ENCODE measurements at regions of chr21 and their contacts with region 1.

Region 1: DNA sequence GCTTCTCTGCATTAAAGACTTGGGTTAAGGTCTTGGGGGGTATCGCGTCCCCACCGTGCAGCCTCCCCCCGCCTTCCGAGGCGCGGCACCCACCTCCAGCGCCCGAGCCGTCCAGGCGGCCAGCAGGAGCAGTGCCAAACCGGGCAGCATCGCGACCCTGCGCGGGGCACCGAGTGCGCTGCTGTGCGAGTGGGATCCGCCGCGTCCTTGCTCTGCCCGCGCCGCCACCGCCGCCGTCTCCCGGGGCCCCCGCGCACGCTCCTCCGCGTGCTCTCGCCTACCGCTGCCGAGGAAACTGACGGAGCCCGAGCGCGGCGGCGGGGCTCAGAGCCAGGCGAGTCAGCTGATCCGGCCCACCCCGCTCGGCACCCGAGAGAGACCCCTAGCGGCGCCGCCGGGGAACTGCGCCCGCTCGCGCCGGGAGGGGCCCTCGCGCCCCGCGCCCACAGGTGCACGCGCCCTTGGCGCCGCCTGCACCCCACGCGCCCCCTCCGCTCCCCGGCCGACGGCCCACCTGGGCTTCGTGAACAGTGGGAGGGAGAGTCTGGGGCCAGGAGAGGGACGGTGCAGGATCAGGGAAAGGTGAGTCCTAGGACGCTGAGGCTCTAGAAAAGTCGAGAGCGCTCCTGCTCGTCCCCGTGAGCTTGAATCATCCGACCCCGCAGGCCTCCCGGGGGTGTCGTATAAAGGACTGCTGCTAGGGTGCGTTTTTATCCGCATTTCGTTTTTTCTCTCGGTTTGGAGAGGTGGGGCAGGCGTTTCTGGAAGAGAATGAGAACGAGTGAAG is at the start of gene APP:
- DNase-seq: peak; percentile 92
- H3K4me3 ChIP-seq: peak within 1 kb of the TSS; percentile 74 to 93 (median 82)
- H3K27ac ChIP-seq: peak within 1 kb of the TSS; percentile 85 to 90 (median 88)
- H3K4me1 ChIP-seq: peaks cover 0 to 37% (median 29%) of the 10 kb centered on the region in 4 donors
- H3K27me3 ChIP-seq: no peaks in the 10 kb centered on the region
- CTCF ChIP-seq: peak in 3 of 4 experiments; percentile 35 to 98 (median 44)
- EP300 ChIP-seq: no peak
- POLR2A ChIP-seq: peak in 1 of 2 donors; percentile 29
- total RNA-seq, gene APP: 239 to 355 (median 299) TPM

Region 2: GRCh38 chr21:25734904-25735645 is 435.6 kb before region 1 on chr21 and contains the starts of genes ATP5PF and GABPA:
- intact Hi-C with region 1: loop called (anchors 5 kb)
- DNase-seq: peak; percentile 99
- H3K4me3 ChIP-seq: peak within 1 kb of the TSS; percentile 81 to 98 (median 85)
- H3K27ac ChIP-seq: peak within 1 kb of the TSS; percentile 94 to 99 (median 98)
- H3K4me1 ChIP-seq: peaks cover 0 to 55% (median 43%) of the 10 kb centered on the region in 4 donors
- H3K27me3 ChIP-seq: no peaks in the 10 kb centered on the region
- CTCF ChIP-seq: no peak
- EP300 ChIP-seq: peak in 1 of 4 donors; percentile 47
- POLR2A ChIP-seq: no peak
- total RNA-seq, gene ATP5PF: 232 to 283 (median 239) TPM
- total RNA-seq, gene GABPA: 17.6 to 32.5 (median 27.2) TPM

Region 3: GRCh38 chr21:25790122-25790877 is 380.4 kb before region 1 on chr21:
- intact Hi-C with region 1: loop called (anchors 10 kb)
- DNase-seq: no peak
- H3K4me3 ChIP-seq: peak overlapping the region; percentile 12 to 40 (median 38)
- H3K27ac ChIP-seq: peak overlapping the region in 3 of 4 donors; percentile 71 to 75 (median 72)
- H3K4me1 ChIP-seq: peaks cover 0 to 19% (median 15%) of the 10 kb centered on the region in 4 donors
- H3K27me3 ChIP-seq: no peaks in the 10 kb centered on the region
- CTCF ChIP-seq: peak in 3 of 4 experiments; percentile 27 to 48 (median 35)
- EP300 ChIP-seq: no peak
- POLR2A ChIP-seq: no peak

Region 4: GRCh38 chr21:25881525-25882376 is 288.9 kb before region 1 on chr21:
- intact Hi-C with region 1: loop called (anchors 1 kb)
- DNase-seq: peak; percentile 83
- H3K4me3 ChIP-seq: no peak overlapping the region
- H3K27ac ChIP-seq: no peak overlapping the region
- H3K4me1 ChIP-seq: no peaks in the 10 kb centered on the region
- H3K27me3 ChIP-seq: no peaks in the 10 kb centered on the region
- CTCF ChIP-seq: peak; percentile 64 to 96 (median 82)
- EP300 ChIP-seq: no peak
- POLR2A ChIP-seq: no peak

Region 5: GRCh38 chr21:25895565-25896205 is 275.0 kb before region 1 on chr21:
- intact Hi-C with region 1: loop called (anchors 2 kb)
- DNase-seq: no peak
- H3K4me3 ChIP-seq: no peak overlapping the region
- H3K27ac ChIP-seq: no peak overlapping the region
- H3K4me1 ChIP-seq: peaks cover 0 to 6% (median 0%) of the 10 kb centered on the region in 4 donors
- H3K27me3 ChIP-seq: no peaks in the 10 kb centered on the region
- CTCF ChIP-seq: peak in 3 of 4 experiments; percentile 13 to 49 (median 45)
- EP300 ChIP-seq: no peak
- POLR2A ChIP-seq: no peak

Region 6: DNA sequence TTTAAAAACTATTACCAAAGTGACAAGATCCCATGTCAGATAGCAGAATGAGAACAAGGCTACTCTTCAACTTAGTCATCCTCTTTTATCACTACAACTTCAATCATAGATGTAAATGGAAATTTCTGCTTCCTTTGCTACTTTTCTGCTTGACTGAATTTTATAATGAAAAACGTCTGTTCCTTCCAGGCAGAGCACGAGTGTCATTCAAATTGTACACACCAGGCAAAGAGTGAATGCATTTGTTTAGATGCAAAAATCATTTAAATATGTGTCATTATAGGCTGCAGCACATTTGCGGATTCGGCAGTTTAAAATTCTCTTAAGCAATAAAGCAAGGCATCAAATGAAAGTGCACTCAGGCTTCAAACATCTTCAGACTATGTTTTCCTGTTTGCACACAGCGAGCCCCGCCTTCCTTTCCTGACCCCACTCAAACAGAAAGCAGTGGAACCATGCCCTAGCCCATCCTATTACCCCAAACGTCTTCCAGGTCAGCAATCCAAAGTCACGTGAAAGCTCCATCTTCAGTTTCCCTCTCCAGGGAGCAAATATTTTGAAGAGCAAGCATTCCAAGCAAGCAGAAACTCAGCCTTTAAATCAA is 99.7 kb before region 1 on chr21:
- intact Hi-C with region 1: loop called (anchors 5 kb)
- DNase-seq: peak; percentile 81
- H3K4me3 ChIP-seq: peak overlapping the region in 1 of 4 donors; percentile 1
- H3K27ac ChIP-seq: peak overlapping the region in 3 of 4 donors; percentile 23 to 30 (median 24)
- H3K4me1 ChIP-seq: peaks cover 0 to 27% (median 25%) of the 10 kb centered on the region in 4 donors
- H3K27me3 ChIP-seq: no peaks in the 10 kb centered on the region
- CTCF ChIP-seq: no peak
- EP300 ChIP-seq: no peak
- POLR2A ChIP-seq: no peak

Region 7: DNA sequence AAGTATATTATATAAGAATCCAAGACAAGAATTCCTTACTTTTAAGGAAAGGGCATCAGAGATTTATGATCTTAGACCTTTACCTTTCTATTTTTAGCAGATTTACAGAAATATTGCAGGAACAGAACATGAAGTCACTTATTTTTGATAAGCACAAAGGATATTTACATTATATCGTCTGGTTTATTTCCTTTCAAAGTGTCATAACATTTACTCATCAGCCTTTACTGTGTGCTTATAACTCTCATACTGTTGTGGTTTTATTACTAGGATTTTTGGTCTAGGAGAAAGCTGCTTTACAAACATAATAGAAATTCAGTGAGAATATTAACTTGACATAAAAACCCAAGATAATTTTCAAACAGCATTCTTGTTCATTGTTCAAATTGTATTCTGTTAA is 47.7 kb before region 1 on chr21:
- intact Hi-C with region 1: loop called (anchors 2 kb)
- DNase-seq: no peak
- H3K4me3 ChIP-seq: no peak overlapping the region
- H3K27ac ChIP-seq: peak overlapping the region; percentile 5 to 70 (median 54)
- H3K4me1 ChIP-seq: peaks cover 0 to 57% (median 50%) of the 10 kb centered on the region in 4 donors
- H3K27me3 ChIP-seq: no peaks in the 10 kb centered on the region
- CTCF ChIP-seq: no peak
- EP300 ChIP-seq: no peak
- POLR2A ChIP-seq: no peak

Region 8: DNA sequence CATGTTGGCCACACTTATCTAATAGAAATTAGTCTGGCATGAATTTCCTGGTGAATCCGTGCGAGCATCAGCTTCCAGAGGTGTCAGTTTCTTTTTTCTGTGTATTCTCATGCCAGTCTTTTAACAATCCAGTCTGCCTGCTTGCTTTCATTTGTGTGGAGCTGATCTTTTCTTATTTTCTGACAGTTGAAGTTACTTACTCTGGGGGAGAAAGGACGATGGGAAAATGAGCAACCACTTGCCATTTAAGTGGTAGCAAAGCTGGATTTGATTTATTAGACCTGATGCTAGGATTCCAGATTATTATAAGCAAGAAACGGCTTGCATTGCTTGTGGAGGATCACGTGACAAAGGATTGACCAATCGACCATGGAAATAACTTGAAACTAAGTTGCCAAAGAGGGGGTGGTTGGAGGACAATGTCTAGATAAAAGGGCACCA is 24.2 kb after region 1 on chr21:
- intact Hi-C with region 1: no loop called
- DNase-seq: no peak
- H3K4me3 ChIP-seq: no peak overlapping the region
- H3K27ac ChIP-seq: no peak overlapping the region
- H3K4me1 ChIP-seq: no peaks in the 10 kb centered on the region
- H3K27me3 ChIP-seq: no peaks in the 10 kb centered on the region
- CTCF ChIP-seq: no peak
- EP300 ChIP-seq: no peak
- POLR2A ChIP-seq: no peak